ENCODE measurements at regions of chr14 and their contacts with region 1.

Region 1: GRCh38 chr14:67111022-67111421 is 78.2 kb upstream of the GARIN2 start:
- DNase-seq: no peak
- ATAC-seq: peak; percentile 79
- H3K4me3 ChIP-seq: no peak overlapping the region
- H3K27ac ChIP-seq: no peak overlapping the region
- H3K4me1 ChIP-seq: no peaks in the 10 kb centered on the region
- H3K27me3 ChIP-seq: no peaks in the 10 kb centered on the region
- CTCF ChIP-seq: no peak

Region 2: DNA sequence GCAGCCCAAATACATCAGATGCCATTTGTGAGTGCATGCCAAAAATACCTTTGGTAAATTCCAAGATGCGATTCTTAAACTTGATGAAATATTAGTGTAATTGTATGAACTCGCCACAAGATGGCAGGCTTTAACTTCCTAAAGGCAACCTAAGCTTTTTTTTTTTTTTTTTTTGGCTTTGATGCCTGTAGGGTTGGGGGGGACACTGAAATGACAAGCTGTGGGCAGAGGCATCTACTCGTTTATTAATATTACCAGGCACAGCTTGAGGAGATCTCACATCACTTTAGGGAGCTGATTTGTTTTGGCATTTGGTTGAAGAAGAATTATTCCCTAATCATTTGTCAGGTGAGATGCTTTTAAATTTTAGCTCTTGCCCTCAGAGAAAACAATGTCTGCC is 751.5 kb before region 1 on chr14:
- CTCF ChIA-PET with region 1: no interaction called
- POLR2A ChIA-PET with region 1: no interaction called
- intact Hi-C with region 1: loop called (anchors 10 kb)
- DNase-seq: peak; percentile 70
- ATAC-seq: peak; percentile 34
- H3K4me3 ChIP-seq: no peak overlapping the region
- H3K27ac ChIP-seq: no peak overlapping the region
- H3K4me1 ChIP-seq: no peaks in the 10 kb centered on the region
- H3K27me3 ChIP-seq: peaks cover 40% of the 10 kb centered on the region
- CTCF ChIP-seq: peak; percentile 84

Region 3: DNA sequence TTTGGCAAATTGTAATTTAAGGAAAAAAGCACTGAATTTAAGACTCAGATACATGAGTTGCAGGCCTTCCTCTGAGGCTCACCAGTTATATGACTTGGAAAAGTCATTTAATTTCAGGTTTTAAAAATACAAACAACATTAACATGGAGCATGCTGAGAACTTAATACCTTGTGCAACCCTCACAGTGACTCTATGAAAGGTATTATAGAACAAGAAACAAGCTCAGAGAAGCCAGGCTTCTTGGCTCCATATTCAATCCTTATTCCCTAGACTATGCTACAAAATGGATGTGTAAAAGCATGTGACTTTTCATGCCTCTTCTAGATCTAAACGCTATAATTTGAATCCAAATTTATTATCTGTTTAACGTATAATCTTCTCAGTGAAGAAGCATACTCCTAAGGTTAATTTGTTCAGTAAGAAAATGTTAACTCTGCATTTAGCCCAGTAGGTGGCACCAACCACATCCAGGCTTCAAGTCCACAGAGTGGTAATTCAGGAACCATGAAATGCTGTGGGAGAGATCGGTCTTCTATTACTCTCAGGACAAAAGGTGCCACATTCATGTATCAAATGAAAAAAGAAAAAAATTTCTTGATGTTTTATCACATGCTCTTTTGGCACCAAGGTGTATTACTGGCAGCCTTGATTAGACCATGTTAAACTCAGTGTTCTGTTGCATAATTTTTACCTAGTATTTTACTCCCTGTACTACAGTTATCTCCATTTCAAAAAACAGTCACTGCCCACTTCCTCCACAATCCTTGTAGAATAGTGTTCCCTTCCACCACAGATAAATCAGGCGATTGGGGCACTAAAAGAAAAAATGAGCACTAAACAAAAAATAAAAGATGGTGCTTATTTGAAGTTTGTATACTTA is 615.6 kb before region 1 on chr14:
- CTCF ChIA-PET with region 1: no interaction called
- POLR2A ChIA-PET with region 1: no interaction called
- intact Hi-C with region 1: loop called (anchors 5 kb)
- DNase-seq: peak; percentile 70
- ATAC-seq: peak; percentile 99
- H3K4me3 ChIP-seq: peak overlapping the region; percentile 16; the same call in 1 of the 2 replicates
- H3K27ac ChIP-seq: no peak overlapping the region
- H3K4me1 ChIP-seq: no peaks in the 10 kb centered on the region
- H3K27me3 ChIP-seq: no peaks in the 10 kb centered on the region
- CTCF ChIP-seq: peak; percentile 90

Region 4: GRCh38 chr14:66746316-66747006 is 364.6 kb before region 1 on chr14:
- CTCF ChIA-PET with region 1: no interaction called
- POLR2A ChIA-PET with region 1: no interaction called
- intact Hi-C with region 1: loop called (anchors 5 kb)
- DNase-seq: peak; percentile 71
- ATAC-seq: peak; percentile 95
- H3K4me3 ChIP-seq: no peak overlapping the region
- H3K27ac ChIP-seq: no peak overlapping the region
- H3K4me1 ChIP-seq: no peaks in the 10 kb centered on the region
- H3K27me3 ChIP-seq: no peaks in the 10 kb centered on the region
- CTCF ChIP-seq: peak; percentile 90

Region 5: DNA sequence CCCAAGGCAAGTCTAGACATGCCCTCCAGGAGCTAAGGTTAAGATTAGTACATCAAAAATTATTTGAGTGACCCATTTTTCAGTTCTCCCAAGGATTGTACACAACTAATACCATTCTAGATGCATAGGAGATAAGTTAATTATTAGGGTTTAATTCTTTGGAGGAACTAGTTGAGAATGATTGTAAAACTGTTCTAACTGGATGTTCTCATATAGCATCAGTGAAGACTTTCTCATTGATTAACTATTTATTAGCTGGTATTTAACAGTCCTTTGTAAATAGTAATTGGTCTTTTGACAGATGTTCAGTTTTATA is 178.3 kb before region 1 on chr14:
- CTCF ChIA-PET with region 1: no interaction called
- POLR2A ChIA-PET with region 1: no interaction called
- intact Hi-C with region 1: loop called (anchors 5 kb)
- DNase-seq: no peak
- ATAC-seq: no peak
- H3K4me3 ChIP-seq: no peak overlapping the region
- H3K27ac ChIP-seq: peak overlapping the region; percentile 13; the same call in 1 of the 2 replicates
- H3K4me1 ChIP-seq: peaks cover 21% of the 10 kb centered on the region
- H3K27me3 ChIP-seq: no peaks in the 10 kb centered on the region
- CTCF ChIP-seq: no peak

Region 6: GRCh38 chr14:66974397-66975025 is 136.5 kb before region 1 on chr14:
- CTCF ChIA-PET with region 1: no interaction called
- POLR2A ChIA-PET with region 1: no interaction called
- intact Hi-C with region 1: loop called (anchors 5 kb)
- DNase-seq: peak; percentile 59
- ATAC-seq: peak; percentile 87
- H3K4me3 ChIP-seq: no peak overlapping the region
- H3K27ac ChIP-seq: no peak overlapping the region
- H3K4me1 ChIP-seq: peaks cover 22% of the 10 kb centered on the region
- H3K27me3 ChIP-seq: no peaks in the 10 kb centered on the region
- CTCF ChIP-seq: no peak

Region 7: DNA sequence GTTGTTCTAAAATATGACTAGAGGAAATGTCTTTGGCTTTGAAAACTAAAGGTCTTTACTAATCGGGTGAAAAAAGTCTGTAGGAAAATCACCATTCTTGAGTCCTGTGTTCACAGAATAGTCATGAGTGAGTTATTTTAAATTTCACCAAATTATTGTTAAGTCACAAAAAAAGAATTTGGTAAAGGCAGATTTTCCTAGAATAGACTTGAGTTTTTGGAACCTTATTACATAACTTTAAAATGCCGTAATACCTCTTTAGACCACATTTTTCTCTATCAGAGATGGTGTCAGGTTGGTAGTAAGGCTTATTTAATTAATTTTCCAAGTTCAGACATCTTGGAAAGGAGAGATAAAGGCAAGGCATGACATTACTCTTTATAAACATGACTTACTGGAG is 106.5 kb before region 1 on chr14:
- CTCF ChIA-PET with region 1: no interaction called
- POLR2A ChIA-PET with region 1: no interaction called
- intact Hi-C with region 1: loop called (anchors 5 kb)
- DNase-seq: no peak
- ATAC-seq: no peak
- H3K4me3 ChIP-seq: no peak overlapping the region
- H3K27ac ChIP-seq: no peak overlapping the region
- H3K4me1 ChIP-seq: peaks cover 15% of the 10 kb centered on the region
- H3K27me3 ChIP-seq: no peaks in the 10 kb centered on the region
- CTCF ChIP-seq: no peak

Measured in PC-3 (cell line).